ENCODE measurements at regions of chr12 and their contacts with region 1.

Region 1: GRCh38 chr12:3964439-3964838 is 91.2 kb upstream of the PARP11 start:
- DNase-seq: no peak
- H3K4me3 ChIP-seq: no peak overlapping the region
- H3K4me3 Mint-ChIP-seq: no peak overlapping the region
- H3K27ac ChIP-seq: no peak overlapping the region
- H3K27ac Mint-ChIP-seq: peak overlapping the region in 4 of 7 donors; percentile 8 to 83 (median 48)
- H3K4me1 ChIP-seq: peaks cover 20% of the 10 kb centered on the region
- H3K4me1 Mint-ChIP-seq: peaks cover 18 to 37% (median 26%) of the 10 kb centered on the region in 4 donors
- H3K27me3 ChIP-seq: no peaks in the 10 kb centered on the region
- H3K27me3 Mint-ChIP-seq: no peaks in the 10 kb centered on the region

Region 2: GRCh38 chr12:3777206-3777809 is 187.1 kb before region 1 on chr12:
- CTCF ChIA-PET with region 1: no interaction called
- POLR2A ChIA-PET with region 1: no interaction called
- intact Hi-C with region 1: no loop called
- DNase-seq: peak in 4 of 5 donors; percentile 37 to 45 (median 42)
- H3K4me3 ChIP-seq: no peak overlapping the region
- H3K4me3 Mint-ChIP-seq: no peak overlapping the region
- H3K27ac ChIP-seq: no peak overlapping the region
- H3K27ac Mint-ChIP-seq: no peak overlapping the region
- H3K4me1 ChIP-seq: peaks cover 5% of the 10 kb centered on the region
- H3K4me1 Mint-ChIP-seq: peaks cover 4 to 6% (median 5%) of the 10 kb centered on the region in 4 donors
- H3K27me3 ChIP-seq: no peaks in the 10 kb centered on the region
- H3K27me3 Mint-ChIP-seq: no peaks in the 10 kb centered on the region

Region 3: DNA sequence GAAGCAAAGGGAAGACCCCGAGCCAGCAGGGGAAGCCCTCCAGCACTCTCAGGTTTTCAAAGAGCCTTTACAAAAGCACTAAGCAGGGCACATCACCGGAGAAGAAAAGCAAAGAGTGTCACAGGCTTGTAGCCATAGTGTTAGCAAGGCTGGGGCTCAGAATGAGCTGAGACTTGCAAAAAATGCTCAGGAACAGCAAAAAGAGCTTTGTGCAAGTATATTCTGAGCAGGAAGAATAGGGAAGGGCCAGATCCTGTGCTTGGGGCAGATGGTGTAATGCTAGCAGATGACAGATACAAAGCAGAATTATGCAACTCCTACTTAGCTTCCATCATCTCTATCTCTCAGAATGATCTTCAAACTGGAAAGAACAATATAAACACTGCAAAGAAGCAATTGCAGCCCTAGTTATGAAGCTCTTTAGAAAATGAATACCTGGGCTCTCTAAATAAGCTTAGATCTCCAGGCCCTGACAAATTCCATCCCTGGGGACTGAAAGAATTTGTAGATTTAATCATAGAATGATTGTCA is 67.6 kb before region 1 on chr12:
- CTCF ChIA-PET with region 1: interaction called, 458 read pairs
- POLR2A ChIA-PET with region 1: interaction called, 36 read pairs
- intact Hi-C with region 1: loop called (anchors 1 kb)
- DNase-seq: no peak
- H3K4me3 ChIP-seq: peak overlapping the region in 1 of 2 donors; percentile 17
- H3K4me3 Mint-ChIP-seq: peak overlapping the region; percentile 61 to 88 (median 81)
- H3K27ac ChIP-seq: peak overlapping the region; percentile 61
- H3K27ac Mint-ChIP-seq: peak overlapping the region in 5 of 7 donors; percentile 95 to 99 (median 97)
- H3K4me1 ChIP-seq: peaks cover 95% of the 10 kb centered on the region
- H3K4me1 Mint-ChIP-seq: peaks cover 0 to 40% (median 19%) of the 10 kb centered on the region in 4 donors
- H3K27me3 ChIP-seq: no peaks in the 10 kb centered on the region
- H3K27me3 Mint-ChIP-seq: no peaks in the 10 kb centered on the region

Region 4: DNA sequence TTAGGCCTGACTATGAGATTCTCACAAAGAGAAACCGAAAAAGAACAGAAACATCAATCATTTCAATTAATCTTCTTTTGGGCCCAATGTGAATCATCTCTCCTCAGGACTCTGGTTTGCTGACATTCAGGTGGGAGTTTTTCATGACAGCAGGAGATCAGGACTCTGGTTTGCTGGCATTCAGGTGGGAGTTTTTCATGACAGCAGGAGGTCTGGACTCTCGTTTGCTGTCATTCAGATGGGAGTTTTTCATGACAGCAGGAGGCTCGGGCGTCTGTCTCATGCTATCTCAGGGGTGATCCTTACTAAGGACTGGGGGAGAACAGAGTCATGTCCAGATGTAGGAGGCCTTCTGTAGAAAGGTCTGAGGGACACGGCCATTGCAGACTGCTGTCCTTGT is 51.2 kb before region 1 on chr12:
- CTCF ChIA-PET with region 1: interaction called, 25 read pairs
- POLR2A ChIA-PET with region 1: interaction called, 18 read pairs
- intact Hi-C with region 1: no loop called
- DNase-seq: no peak
- H3K4me3 ChIP-seq: no peak overlapping the region
- H3K4me3 Mint-ChIP-seq: peak overlapping the region in 1 of 8 donors; percentile 43
- H3K27ac ChIP-seq: no peak overlapping the region
- H3K27ac Mint-ChIP-seq: peak overlapping the region; percentile 4 to 87 (median 49)
- H3K4me1 ChIP-seq: peaks cover 2% of the 10 kb centered on the region
- H3K4me1 Mint-ChIP-seq: peaks cover 2 to 15% (median 4%) of the 10 kb centered on the region in 4 donors
- H3K27me3 ChIP-seq: no peaks in the 10 kb centered on the region
- H3K27me3 Mint-ChIP-seq: no peaks in the 10 kb centered on the region

Region 5: DNA sequence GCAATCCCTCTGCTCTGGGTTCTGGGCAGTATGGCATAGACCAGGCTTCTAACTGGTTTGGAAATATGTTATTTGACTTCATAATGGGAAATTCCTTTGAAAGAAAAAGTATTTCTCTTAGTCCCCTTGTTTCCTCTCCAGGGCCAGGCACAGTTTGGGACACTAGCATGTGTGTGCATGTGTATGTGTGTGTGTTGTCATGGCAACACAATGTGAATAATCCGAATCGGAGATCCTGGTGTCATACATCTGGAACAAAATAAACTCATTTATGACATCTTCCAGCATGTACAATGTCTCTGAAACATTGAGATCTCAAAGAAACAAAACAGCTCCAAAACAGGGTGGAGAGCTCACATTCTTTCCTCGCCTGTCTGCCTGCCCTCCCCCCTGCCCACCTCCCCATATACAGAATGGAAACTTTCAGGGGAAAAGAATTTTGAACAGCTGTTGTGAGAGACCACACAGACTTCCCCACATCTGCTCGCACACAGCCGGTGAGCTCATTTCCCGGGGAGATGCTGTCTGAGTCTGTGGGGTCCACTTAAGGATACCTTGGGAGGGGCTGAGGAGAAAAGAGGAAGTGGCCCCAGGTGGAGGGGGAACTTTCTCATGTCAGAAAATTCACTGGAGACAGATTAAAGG is 35.8 kb before region 1 on chr12:
- CTCF ChIA-PET with region 1: interaction called, 36 read pairs
- POLR2A ChIA-PET with region 1: interaction called, 24 read pairs
- intact Hi-C with region 1: no loop called
- DNase-seq: no peak
- H3K4me3 ChIP-seq: no peak overlapping the region
- H3K4me3 Mint-ChIP-seq: no peak overlapping the region
- H3K27ac ChIP-seq: no peak overlapping the region
- H3K27ac Mint-ChIP-seq: peak overlapping the region in 5 of 7 donors; percentile 19 to 84 (median 64)
- H3K4me1 ChIP-seq: peaks cover 41% of the 10 kb centered on the region
- H3K4me1 Mint-ChIP-seq: peaks cover 34 to 70% (median 56%) of the 10 kb centered on the region in 4 donors
- H3K27me3 ChIP-seq: no peaks in the 10 kb centered on the region
- H3K27me3 Mint-ChIP-seq: no peaks in the 10 kb centered on the region

Region 6: GRCh38 chr12:3947781-3948180 is 16.7 kb before region 1 on chr12:
- CTCF ChIA-PET with region 1: interaction called, 98 read pairs
- POLR2A ChIA-PET with region 1: interaction called, 91 read pairs
- intact Hi-C with region 1: loop called (anchors 1 kb)
- DNase-seq: peak in 4 of 5 donors; percentile 73 to 82 (median 78)
- H3K4me3 ChIP-seq: no peak overlapping the region
- H3K4me3 Mint-ChIP-seq: peak overlapping the region; percentile 31 to 84 (median 54)
- H3K27ac ChIP-seq: peak overlapping the region; percentile 57
- H3K27ac Mint-ChIP-seq: peak overlapping the region; percentile 89 to 99 (median 99)
- H3K4me1 ChIP-seq: peaks cover 65% of the 10 kb centered on the region
- H3K4me1 Mint-ChIP-seq: peaks cover 50 to 86% (median 63%) of the 10 kb centered on the region in 4 donors
- H3K27me3 ChIP-seq: no peaks in the 10 kb centered on the region
- H3K27me3 Mint-ChIP-seq: no peaks in the 10 kb centered on the region

Region 7: DNA sequence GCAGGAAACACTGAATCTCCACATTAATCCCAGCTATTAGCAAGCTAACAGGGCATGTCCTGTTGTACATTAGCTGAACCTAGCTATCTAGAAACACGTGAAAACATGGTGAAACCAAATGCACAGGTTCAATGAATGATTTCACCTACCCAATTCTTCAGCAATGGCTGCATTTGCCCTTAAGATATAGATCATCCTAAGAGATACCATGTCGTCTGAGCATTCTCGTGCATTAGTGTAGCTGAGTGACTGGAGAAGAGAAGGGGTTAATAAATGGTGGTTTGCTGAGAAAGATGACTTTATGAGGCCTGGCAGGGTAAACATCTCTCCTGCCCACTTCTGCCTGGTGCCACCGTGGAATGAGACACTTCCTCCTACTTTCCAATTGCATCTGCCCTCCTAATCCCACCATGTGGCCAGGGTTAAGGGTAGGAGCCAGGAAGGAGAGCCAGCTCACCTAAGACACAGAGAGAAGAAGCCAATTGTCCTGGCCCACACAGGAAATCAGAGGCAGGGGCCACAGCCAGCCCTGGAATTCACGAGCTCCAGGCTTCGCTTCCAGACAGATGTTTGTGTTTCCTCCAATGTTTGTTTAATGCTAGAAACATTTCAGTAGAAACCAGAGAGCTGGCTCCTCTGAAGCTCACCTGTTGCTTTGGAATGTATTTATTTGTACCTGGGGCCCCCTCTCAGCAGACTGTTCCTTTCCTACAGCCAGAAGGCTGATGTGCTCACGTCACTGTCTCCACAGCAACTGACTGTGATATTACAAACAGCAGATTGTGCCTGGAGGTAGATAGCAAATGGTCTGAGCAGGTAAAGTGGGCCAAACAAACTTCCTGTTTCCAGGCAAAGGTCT is 34.8 kb after region 1 on chr12:
- CTCF ChIA-PET with region 1: interaction called, 41 read pairs
- POLR2A ChIA-PET with region 1: interaction called, 3 read pairs
- intact Hi-C with region 1: no loop called
- DNase-seq: peak; percentile 39 to 60 (median 55)
- H3K4me3 ChIP-seq: no peak overlapping the region
- H3K4me3 Mint-ChIP-seq: peak overlapping the region in 1 of 8 donors; percentile 15
- H3K27ac ChIP-seq: no peak overlapping the region
- H3K27ac Mint-ChIP-seq: peak overlapping the region in 6 of 7 donors; percentile 70 to 87 (median 84)
- H3K4me1 ChIP-seq: peaks cover 9% of the 10 kb centered on the region
- H3K4me1 Mint-ChIP-seq: peaks cover 7 to 30% (median 20%) of the 10 kb centered on the region in 4 donors
- H3K27me3 ChIP-seq: no peaks in the 10 kb centered on the region
- H3K27me3 Mint-ChIP-seq: no peaks in the 10 kb centered on the region

Region 8: DNA sequence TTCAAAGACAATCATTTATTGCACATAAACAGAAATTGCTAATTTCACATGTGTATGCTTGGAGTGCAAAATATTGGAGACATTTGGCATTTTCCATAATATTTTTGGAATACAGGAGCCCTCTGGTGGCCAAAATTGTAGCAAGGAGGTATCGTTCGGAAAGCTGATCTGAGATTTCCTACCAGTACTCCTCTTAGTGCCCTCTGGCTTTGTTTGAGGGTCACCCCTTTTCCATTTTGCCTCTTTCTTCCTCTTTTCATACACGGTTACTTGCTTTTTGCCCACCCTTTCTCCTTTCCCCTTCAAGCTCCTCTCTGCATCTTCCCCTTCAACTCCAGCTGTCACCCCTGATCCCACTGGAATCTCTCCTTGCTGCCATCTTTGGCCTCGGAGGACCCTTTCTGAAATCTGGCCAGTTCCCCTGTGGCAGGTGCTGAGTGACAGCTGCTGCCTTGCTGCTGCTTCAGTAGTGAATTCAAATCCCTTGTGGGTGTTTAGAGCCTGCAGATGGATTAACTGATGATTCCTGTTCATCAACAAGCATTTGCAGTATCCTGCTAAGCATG is 73.4 kb after region 1 on chr12:
- CTCF ChIA-PET with region 1: interaction called, 52 read pairs
- POLR2A ChIA-PET with region 1: interaction called, 3 read pairs
- intact Hi-C with region 1: no loop called
- DNase-seq: peak in 4 of 5 donors; percentile 4 to 20 (median 8)
- H3K4me3 ChIP-seq: no peak overlapping the region
- H3K4me3 Mint-ChIP-seq: no peak overlapping the region
- H3K27ac ChIP-seq: no peak overlapping the region
- H3K27ac Mint-ChIP-seq: peak overlapping the region in 1 of 7 donors; percentile 39
- H3K4me1 ChIP-seq: no peaks in the 10 kb centered on the region
- H3K4me1 Mint-ChIP-seq: peaks cover 0 to 6% (median under 1%) of the 10 kb centered on the region in 4 donors
- H3K27me3 ChIP-seq: no peaks in the 10 kb centered on the region
- H3K27me3 Mint-ChIP-seq: no peaks in the 10 kb centered on the region

Region 9: GRCh38 chr12:4052691-4053090 is 88.3 kb after region 1 on chr12:
- CTCF ChIA-PET with region 1: no interaction called
- POLR2A ChIA-PET with region 1: no interaction called
- intact Hi-C with region 1: no loop called
- DNase-seq: no peak
- H3K4me3 ChIP-seq: no peak overlapping the region
- H3K4me3 Mint-ChIP-seq: no peak overlapping the region
- H3K27ac ChIP-seq: no peak overlapping the region
- H3K27ac Mint-ChIP-seq: peak overlapping the region in 2 of 7 donors; percentile 11 to 59
- H3K4me1 ChIP-seq: peaks cover 6% of the 10 kb centered on the region
- H3K4me1 Mint-ChIP-seq: peaks cover 5 to 15% (median 9%) of the 10 kb centered on the region in 4 donors
- H3K27me3 ChIP-seq: no peaks in the 10 kb centered on the region
- H3K27me3 Mint-ChIP-seq: no peaks in the 10 kb centered on the region

Region 10: DNA sequence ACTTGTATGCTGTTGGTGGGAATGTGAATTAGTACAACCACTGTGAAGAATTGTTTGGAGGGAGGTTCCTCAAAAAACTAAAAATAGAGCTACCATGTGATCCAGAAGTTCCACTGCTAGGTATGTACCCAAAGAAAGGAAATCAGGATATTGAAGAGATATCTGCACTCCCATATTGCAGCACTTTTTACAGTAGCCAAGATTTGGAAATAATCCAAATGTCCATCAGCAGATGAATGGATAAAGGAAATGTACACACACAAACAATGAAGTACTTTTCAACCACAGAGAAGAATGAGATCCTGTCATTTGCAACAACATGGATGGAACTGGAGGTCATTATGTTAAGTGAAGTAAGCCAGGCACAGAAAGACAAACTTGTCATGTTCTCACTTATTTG is 382.5 kb after region 1 on chr12:
- CTCF ChIA-PET with region 1: no interaction called
- POLR2A ChIA-PET with region 1: no interaction called
- intact Hi-C with region 1: no loop called
- DNase-seq: no peak
- H3K4me3 ChIP-seq: no peak overlapping the region
- H3K4me3 Mint-ChIP-seq: no peak overlapping the region
- H3K27ac ChIP-seq: no peak overlapping the region
- H3K27ac Mint-ChIP-seq: peak overlapping the region in 2 of 7 donors; percentile 3 to 30
- H3K4me1 ChIP-seq: no peaks in the 10 kb centered on the region
- H3K4me1 Mint-ChIP-seq: peaks cover 0 to 2% (median 0%) of the 10 kb centered on the region in 4 donors
- H3K27me3 ChIP-seq: no peaks in the 10 kb centered on the region
- H3K27me3 Mint-ChIP-seq: no peaks in the 10 kb centered on the region